HepG2 (cell line): ENCODE measurements at regions of chr19 and their contacts with region 1.

Region 1: DNA sequence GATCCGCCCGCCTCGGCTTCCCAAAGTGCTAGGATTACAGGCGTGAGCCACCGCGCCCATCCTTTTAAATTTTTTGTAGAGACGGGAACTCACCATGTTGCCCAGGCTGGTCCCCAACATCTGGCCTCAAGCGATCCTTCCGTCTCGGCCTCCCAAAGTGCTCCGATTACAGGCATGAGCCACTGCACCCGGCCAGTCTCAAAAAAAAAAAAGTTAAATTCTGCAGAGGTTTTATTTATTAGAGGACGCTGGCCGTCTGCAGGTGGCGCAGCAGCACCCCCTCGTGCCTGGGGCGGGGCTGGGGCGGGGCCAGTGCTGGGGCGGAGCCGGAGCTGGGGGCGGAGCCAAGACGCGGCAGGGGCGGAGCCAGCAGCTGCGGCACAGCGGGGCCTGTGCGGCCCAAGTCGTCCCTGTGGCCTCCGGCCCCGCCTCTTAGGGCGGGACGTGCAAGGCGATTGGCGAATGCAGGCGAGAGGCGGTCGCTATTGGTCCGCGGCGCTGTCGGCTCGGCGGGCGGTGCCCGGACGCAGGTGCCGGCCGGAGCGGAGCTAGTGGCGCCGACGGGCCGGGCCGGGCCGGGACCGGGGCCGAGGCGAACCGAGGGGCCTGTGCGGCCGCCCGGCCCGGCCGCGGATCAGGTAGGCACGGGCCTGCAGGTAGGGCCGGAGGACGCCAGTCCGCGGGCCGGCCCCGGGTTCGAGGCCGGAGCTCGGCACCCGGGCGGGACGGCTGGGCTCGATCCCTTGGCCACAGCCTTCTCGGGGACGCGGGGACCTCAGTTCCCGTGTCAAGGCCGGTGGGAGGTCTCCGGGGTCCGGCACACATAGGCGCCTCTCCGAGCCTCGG is at the start of gene MARCHF2:
- DNase-seq: peak; percentile 90
- ATAC-seq: peak; percentile 98
- H3K4me3 ChIP-seq: peak within 1 kb of the TSS; percentile 67 to 92 (median 70)
- H3K27ac ChIP-seq: no peak within 1 kb of the TSS
- H3K4me1 ChIP-seq: peaks cover 30% of the 10 kb centered on the region
- H3K27me3 ChIP-seq: no peaks in the 10 kb centered on the region
- CTCF ChIP-seq: peak; percentile 70
- EP300 ChIP-seq: 0 out of 4 replicates have a peak, but pooled peaks of 1 of the 2 experiments have one; percentile 22
- POLR2A ChIP-seq: peak in 1 of 2 experiments; percentile 28; a peak in 1 of 4 replicates
- RAD21 ChIP-seq: peak; percentile 57
- total RNA-seq, gene MARCHF2: 10.6 and 12.7 TPM in 2 replicates

Region 2: GRCh38 chr19:8444645-8445487 is 31.9 kb after region 1 on chr19 and contains the start of gene HNRNPM:
- CTCF ChIA-PET with region 1: no interaction called
- POLR2A ChIA-PET with region 1: interaction called, 22 read pairs
- in situ Hi-C with region 1: loop called (anchors 5 kb)
- intact Hi-C with region 1: loop called (anchors 5 kb)
- DNase-seq: peak; percentile 95
- ATAC-seq: peak; percentile 91
- H3K4me3 ChIP-seq: peak within 1 kb of the TSS; percentile 93 to 99 (median 99)
- H3K27ac ChIP-seq: peak within 1 kb of the TSS; percentile 95
- H3K4me1 ChIP-seq: peaks cover 70% of the 10 kb centered on the region
- H3K27me3 ChIP-seq: no peaks in the 10 kb centered on the region
- CTCF ChIP-seq: 0 out of 2 replicates have a peak, but pooled peaks have one; percentile 2
- EP300 ChIP-seq: 0 out of 4 replicates have a peak, but pooled peaks of 1 of the 2 experiments have one; percentile 16
- POLR2A ChIP-seq: peak; percentile 75 to 85
- RAD21 ChIP-seq: peak; percentile 38
- total RNA-seq, gene HNRNPM: 102 and 144 TPM in 2 replicates

Region 3: GRCh38 chr19:8451885-8452284 is 38.9 kb after region 1 on chr19:
- CTCF ChIA-PET with region 1: no interaction called
- POLR2A ChIA-PET with region 1: interaction called, 9 read pairs
- in situ Hi-C with region 1: loop called (anchors 5 kb)
- intact Hi-C with region 1: loop called (anchors 5 kb)
- DNase-seq: peak; percentile 28
- ATAC-seq: peak; percentile 22; the same call in 1 of the 3 replicates
- H3K4me3 ChIP-seq: no peak overlapping the region
- H3K27ac ChIP-seq: peak overlapping the region; percentile 27
- H3K4me1 ChIP-seq: peaks cover 75% of the 10 kb centered on the region
- H3K27me3 ChIP-seq: no peaks in the 10 kb centered on the region
- CTCF ChIP-seq: no peak
- EP300 ChIP-seq: no peak
- POLR2A ChIP-seq: no peak
- RAD21 ChIP-seq: no peak

Region 4: DNA sequence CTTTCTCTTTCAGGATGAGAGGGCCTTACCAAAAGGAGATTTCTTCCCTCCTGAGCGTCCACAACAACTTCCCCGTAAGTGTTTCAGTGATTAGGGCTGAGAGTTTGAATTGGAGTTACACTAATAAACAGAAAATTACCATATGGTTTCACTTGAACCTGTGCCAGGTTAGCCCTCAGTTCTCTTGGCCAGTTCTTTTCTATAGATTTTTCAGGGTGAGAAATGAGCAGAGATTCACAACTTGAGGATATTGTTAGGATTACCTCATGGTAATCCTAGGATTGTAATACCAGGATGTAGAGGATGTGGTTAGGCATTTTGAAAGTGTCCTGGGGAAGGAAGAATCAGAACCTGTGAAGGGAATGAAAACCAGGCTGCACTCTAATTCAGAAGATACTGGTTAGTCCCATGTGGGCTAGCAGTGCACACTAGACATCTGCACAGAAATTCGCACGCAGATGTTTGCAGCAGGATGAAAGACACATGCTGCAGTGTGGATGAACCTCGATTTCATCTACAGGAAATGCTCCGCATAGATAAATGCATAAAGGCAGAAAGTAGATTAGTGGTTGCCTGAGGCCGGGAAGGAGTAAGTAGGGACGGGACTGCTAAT is 55.9 kb after region 1 on chr19:
- CTCF ChIA-PET with region 1: no interaction called
- POLR2A ChIA-PET with region 1: no interaction called
- in situ Hi-C with region 1: no loop called
- intact Hi-C with region 1: no loop called
- DNase-seq: no peak
- ATAC-seq: no peak
- H3K4me3 ChIP-seq: no peak overlapping the region
- H3K27ac ChIP-seq: no peak overlapping the region
- H3K4me1 ChIP-seq: no peaks in the 10 kb centered on the region
- H3K27me3 ChIP-seq: no peaks in the 10 kb centered on the region
- CTCF ChIP-seq: no peak
- EP300 ChIP-seq: no peak
- POLR2A ChIP-seq: no peak
- RAD21 ChIP-seq: no peak